ENCODE measurements at regions of chr20 and their contacts with region 1.

Region 1: GRCh38 chr20:46013826-46014516 is 5.3 kb downstream of the MMP9 start:
- DNase-seq: peak; percentile 52
- H3K4me3 Mint-ChIP-seq: no peak overlapping the region
- H3K27ac Mint-ChIP-seq: no peak overlapping the region
- H3K4me1 Mint-ChIP-seq: no peaks in the 10 kb centered on the region
- H3K27me3 Mint-ChIP-seq: peaks cover 31% of the 10 kb centered on the region
- CTCF ChIP-seq: peak; percentile 74

Region 2: GRCh38 chr20:45987108-45987780 is 26.7 kb before region 1 on chr20:
- CTCF ChIA-PET with region 1: interaction called, 146 read pairs
- POLR2A ChIA-PET with region 1: interaction called, 3 read pairs
- intact Hi-C with region 1: loop called (anchors 1 kb)
- DNase-seq: peak; percentile 73
- H3K4me3 Mint-ChIP-seq: no peak overlapping the region
- H3K27ac Mint-ChIP-seq: no peak overlapping the region
- H3K4me1 Mint-ChIP-seq: no peaks in the 10 kb centered on the region
- H3K27me3 Mint-ChIP-seq: no peaks in the 10 kb centered on the region
- CTCF ChIP-seq: peak; percentile 88

Region 3: DNA sequence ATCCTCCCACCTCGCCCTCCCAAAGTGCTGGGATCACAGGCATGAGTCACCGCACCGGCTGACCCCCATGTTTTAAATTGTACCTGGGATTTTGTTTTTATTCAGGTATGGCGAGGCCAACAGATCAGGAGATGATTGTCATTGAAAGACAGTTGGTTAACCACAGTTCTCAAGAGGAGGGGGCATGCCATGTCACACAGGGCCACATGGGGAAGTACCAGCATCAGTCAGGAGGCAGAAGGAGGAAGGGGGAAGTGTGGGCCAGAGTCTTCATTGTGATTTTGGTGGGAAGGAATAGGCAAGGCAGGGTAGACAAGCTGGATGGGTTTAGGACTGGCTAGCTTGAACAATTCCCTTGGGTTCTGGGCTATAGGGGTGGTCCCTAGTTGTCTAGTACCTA is 15.2 kb before region 1 on chr20:
- CTCF ChIA-PET with region 1: interaction called, 61 read pairs
- POLR2A ChIA-PET with region 1: interaction called, 13 read pairs
- intact Hi-C with region 1: no loop called
- DNase-seq: no peak
- H3K4me3 Mint-ChIP-seq: no peak overlapping the region
- H3K27ac Mint-ChIP-seq: no peak overlapping the region
- H3K4me1 Mint-ChIP-seq: peaks cover 14% of the 10 kb centered on the region
- H3K27me3 Mint-ChIP-seq: no peaks in the 10 kb centered on the region
- CTCF ChIP-seq: no peak

Region 4: DNA sequence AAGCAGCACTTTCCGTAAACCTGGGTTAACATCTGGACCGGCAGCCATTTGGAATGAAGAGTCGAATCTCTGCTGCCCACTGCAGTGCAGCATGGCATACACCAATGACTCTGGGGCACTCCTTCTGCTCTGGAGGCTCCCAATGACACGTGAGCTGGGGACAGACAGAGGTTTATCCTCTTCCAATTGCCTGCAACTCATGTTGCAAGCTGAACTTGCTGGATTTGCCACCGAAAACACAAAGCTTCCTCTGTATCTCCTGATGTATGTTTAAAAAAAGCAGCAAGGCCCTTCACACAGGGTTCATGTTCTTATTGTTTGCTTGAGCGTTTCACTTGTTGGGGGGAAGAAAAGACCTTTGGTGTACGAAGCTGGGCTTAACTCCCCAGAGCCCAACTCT is 65.0 kb after region 1 on chr20:
- CTCF ChIA-PET with region 1: interaction called, 22 read pairs
- POLR2A ChIA-PET with region 1: interaction called, 3 read pairs
- intact Hi-C with region 1: no loop called
- DNase-seq: no peak
- H3K4me3 Mint-ChIP-seq: no peak overlapping the region
- H3K27ac Mint-ChIP-seq: no peak overlapping the region
- H3K4me1 Mint-ChIP-seq: peaks cover 6% of the 10 kb centered on the region
- H3K27me3 Mint-ChIP-seq: no peaks in the 10 kb centered on the region
- CTCF ChIP-seq: no peak

Region 5: DNA sequence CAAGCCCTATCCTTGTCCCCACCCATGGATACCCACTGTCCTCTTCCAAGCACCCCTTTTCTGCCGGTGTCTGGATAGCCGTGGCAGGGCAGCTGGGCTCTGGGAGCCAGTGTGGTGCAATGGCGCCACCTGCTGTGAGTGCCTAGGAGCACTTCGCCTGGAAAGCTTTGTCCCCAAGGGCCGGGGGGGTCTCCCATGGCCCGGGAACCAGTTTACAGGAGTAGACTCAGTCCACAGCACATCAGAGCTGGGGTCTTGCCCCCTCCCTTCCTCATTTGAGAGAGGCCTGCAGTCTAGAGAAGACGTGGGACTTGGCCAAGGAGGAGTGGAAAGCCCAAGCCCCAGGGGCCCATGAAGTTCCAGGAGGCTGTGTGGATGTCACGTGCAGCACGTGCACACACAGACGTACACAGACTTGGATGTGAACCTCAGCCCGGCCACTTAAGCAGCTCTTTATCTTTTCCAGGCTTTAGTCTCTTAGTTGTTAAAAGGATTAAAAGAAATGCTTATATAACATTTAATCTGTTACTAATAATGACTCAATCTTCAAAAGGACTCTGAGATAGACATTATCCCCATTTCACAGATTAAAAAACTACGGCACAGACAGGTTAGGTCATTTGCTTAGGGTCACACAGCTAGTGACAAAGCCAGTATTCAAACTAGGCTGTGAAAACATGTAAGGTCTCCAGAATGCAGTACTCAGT is 335.2 kb after region 1 on chr20:
- CTCF ChIA-PET with region 1: interaction called, 11 read pairs
- POLR2A ChIA-PET with region 1: no interaction called
- intact Hi-C with region 1: no loop called
- DNase-seq: peak; percentile 47
- H3K4me3 Mint-ChIP-seq: no peak overlapping the region
- H3K27ac Mint-ChIP-seq: no peak overlapping the region
- H3K4me1 Mint-ChIP-seq: peaks cover 11% of the 10 kb centered on the region
- H3K27me3 Mint-ChIP-seq: no peaks in the 10 kb centered on the region
- CTCF ChIP-seq: peak; percentile 60

Measured in MCF 10A (cell line).